ENCODE measurements at regions of chr22 and their contacts with region 1.

Region 1: GRCh38 chr22:32103658-32104315 is 55.3 kb downstream of the C22orf42 start:
- DNase-seq: no peak
- H3K4me3 Mint-ChIP-seq: no peak overlapping the region
- H3K27ac Mint-ChIP-seq: no peak overlapping the region
- H3K4me1 Mint-ChIP-seq: no peaks in the 10 kb centered on the region
- H3K27me3 Mint-ChIP-seq: peaks cover 19% of the 10 kb centered on the region

Region 2: GRCh38 chr22:32164075-32164860 is 60.5 kb after region 1 on chr22:
- CTCF ChIA-PET with region 1: no interaction called
- intact Hi-C with region 1: no loop called
- DNase-seq: no peak
- H3K4me3 Mint-ChIP-seq: no peak overlapping the region
- H3K27ac Mint-ChIP-seq: no peak overlapping the region
- H3K4me1 Mint-ChIP-seq: peaks cover 3% of the 10 kb centered on the region
- H3K27me3 Mint-ChIP-seq: no peaks in the 10 kb centered on the region

Region 3: DNA sequence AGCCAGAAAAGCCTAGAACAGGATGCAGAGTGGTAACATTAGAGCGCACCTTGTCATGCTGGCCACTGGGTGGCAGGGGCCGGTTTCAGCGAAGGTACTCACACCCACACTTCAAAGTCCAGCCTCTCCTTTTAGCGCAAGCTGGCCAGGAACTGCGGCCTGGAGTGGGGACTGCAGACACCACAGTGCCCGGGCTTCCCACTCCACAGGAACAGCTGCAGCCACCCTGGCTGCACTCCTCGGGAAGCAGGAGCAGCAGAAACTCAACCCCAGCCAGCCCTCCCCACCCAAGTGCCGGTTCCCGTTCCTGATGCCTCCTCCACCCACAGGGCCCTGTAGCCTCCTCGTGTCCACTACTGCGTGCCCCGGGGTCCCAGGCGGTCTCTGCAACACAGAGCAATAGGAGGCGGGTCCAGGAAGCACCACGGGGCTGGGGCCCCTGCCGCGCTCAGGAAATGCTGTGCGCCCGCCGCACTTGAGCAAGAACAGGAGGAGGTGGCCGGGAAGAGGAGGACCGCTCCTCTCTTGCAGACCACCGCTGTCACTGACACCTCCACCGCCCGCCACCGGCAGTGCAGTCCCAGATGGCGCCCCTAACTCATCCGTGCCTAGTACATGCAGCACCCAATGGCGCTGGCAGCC is 98.9 kb after region 1 on chr22:
- CTCF ChIA-PET with region 1: interaction called, 4 read pairs
- intact Hi-C with region 1: loop called (anchors 1 kb)
- DNase-seq: peak; percentile 53
- H3K4me3 Mint-ChIP-seq: peak overlapping the region; percentile 66
- H3K27ac Mint-ChIP-seq: no peak overlapping the region
- H3K4me1 Mint-ChIP-seq: peaks cover 34% of the 10 kb centered on the region
- H3K27me3 Mint-ChIP-seq: peaks cover 17% of the 10 kb centered on the region

Region 4: DNA sequence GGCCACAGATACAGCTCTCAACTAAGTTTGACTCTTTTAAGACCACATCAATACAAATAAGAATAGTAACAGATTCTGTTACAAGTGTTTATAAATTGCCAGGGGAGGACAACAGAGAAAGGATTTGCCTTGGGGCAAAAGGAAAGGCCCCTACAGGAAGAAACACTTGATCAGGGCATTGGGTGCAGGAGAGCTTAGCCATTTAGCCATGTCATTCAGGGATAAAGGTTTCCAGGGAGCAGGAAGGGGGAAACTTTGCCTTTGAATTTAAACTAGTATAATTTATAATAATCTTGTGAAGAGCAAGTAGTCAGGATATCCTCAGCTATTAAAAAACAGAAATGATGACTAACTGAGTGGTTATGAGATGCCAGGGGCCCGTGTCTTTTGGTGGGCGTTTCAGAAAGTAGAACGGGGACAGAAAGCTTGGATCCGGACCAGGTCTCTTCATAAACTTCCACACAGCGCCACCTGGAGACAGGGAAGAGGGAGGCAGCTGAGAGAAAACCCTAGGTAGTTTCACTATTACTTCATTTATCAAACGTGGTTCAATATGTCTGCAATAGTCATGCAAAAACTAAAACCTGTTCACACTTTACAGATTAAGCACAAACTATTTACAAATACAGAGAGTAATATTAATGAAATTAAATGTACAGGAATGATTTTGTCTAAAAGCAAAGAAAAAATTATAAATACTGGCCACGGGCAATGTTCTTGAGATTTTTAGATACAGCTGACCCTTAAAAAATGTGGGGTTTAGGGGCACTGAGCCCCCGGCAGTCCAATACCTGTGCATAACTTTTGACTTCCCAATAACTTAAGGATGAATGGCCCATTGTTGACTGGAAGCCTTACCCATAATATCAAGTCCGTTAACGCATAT is 162.3 kb after region 1 on chr22:
- CTCF ChIA-PET with region 1: interaction called, 3 read pairs
- intact Hi-C with region 1: loop called (anchors 2 kb)
- DNase-seq: peak; percentile 84
- H3K4me3 Mint-ChIP-seq: no peak overlapping the region
- H3K27ac Mint-ChIP-seq: no peak overlapping the region
- H3K4me1 Mint-ChIP-seq: peaks cover 8% of the 10 kb centered on the region
- H3K27me3 Mint-ChIP-seq: no peaks in the 10 kb centered on the region